ENCODE measurements at regions of chr20 and their contacts with region 1.

Region 1: GRCh38 chr20:36745927-36746659 is at the start of gene NDRG3:
- DNase-seq: peak; percentile 94
- H3K4me3 Mint-ChIP-seq: peak within 1 kb of the TSS; percentile 82
- H3K27ac Mint-ChIP-seq: peak within 1 kb of the TSS; percentile 64
- H3K4me1 Mint-ChIP-seq: peaks cover 27% of the 10 kb centered on the region
- H3K27me3 Mint-ChIP-seq: no peaks in the 10 kb centered on the region
- total RNA-seq, gene NDRG3: 32.8 to 33.7 TPM

Region 2: DNA sequence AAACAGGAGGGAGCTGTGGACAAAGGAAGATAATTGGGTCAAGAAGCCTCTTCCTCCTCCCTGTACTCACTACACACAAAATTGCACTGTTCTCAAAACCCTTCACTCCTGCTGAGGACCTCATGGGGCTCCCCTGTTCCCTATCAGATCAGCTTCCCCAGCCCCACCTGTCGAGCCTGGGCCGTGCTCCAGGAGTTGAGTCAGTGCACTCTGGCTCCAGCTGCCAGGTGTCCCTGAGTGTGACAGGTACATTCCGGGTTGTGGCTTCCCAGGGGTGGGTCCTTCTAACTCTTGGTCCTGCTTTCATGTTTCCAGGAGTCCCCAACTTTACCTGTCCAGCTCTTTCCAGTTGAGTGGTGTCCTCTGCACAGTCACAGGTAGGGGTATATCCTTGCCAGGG is 132.1 kb before region 1 on chr20:
- CTCF ChIA-PET with region 1: interaction called, 10 read pairs
- POLR2A ChIA-PET with region 1: interaction called, 3 read pairs
- DNase-seq: no peak
- H3K4me3 Mint-ChIP-seq: no peak overlapping the region
- H3K27ac Mint-ChIP-seq: no peak overlapping the region
- H3K4me1 Mint-ChIP-seq: peaks cover 9% of the 10 kb centered on the region
- H3K27me3 Mint-ChIP-seq: no peaks in the 10 kb centered on the region

Region 3: GRCh38 chr20:36773597-36774390 is 27.7 kb after region 1 on chr20 and contains the start of gene DSN1:
- CTCF ChIA-PET with region 1: interaction called, 10 read pairs
- POLR2A ChIA-PET with region 1: interaction called, 13 read pairs
- DNase-seq: peak; percentile 99
- H3K4me3 Mint-ChIP-seq: peak within 1 kb of the TSS; percentile 91
- H3K27ac Mint-ChIP-seq: peak within 1 kb of the TSS; percentile 85
- H3K4me1 Mint-ChIP-seq: peaks cover 42% of the 10 kb centered on the region
- H3K27me3 Mint-ChIP-seq: peaks cover 2% of the 10 kb centered on the region
- total RNA-seq, gene DSN1: 31.9 to 32.0 TPM

Region 4: DNA sequence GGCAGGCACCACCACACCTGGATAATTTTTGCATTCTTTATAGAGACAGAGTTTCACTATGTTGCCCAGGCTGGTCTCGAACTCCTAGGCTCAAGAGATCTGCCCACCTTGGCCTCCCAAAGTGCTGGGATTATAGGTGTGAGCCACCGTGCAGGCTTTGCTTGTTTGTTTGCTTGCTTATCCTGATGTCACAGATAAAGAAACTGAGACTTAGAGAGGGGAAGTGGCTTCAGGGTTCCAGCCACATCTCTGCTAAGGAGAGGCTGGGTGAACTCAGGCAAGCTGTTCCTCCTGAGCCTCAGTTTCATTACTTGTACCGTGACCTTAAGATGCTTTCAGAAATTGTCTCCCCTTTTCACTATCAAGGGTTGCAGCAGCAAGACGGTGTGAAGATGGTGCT is 81.4 kb after region 1 on chr20:
- CTCF ChIA-PET with region 1: no interaction called
- POLR2A ChIA-PET with region 1: no interaction called
- DNase-seq: peak; percentile 45
- H3K4me3 Mint-ChIP-seq: no peak overlapping the region
- H3K27ac Mint-ChIP-seq: peak overlapping the region; percentile 57
- H3K4me1 Mint-ChIP-seq: peaks cover 25% of the 10 kb centered on the region
- H3K27me3 Mint-ChIP-seq: peaks cover 4% of the 10 kb centered on the region